Activated CD4-positive, alpha-beta T cell treated with anti-CD3 and anti-CD28 coated beads for 36 hours (primary cell): ENCODE measurements at regions of chr12 and their contacts with region 1.

Region 1: GRCh38 chr12:88153959-88154358 is 11.9 kb downstream of the TMTC3 start:
- DNase-seq: no peak
- ATAC-seq: no peak
- H3K4me3 Mint-ChIP-seq: no peak overlapping the region
- H3K27ac Mint-ChIP-seq: no peak overlapping the region
- H3K4me1 Mint-ChIP-seq: peaks cover 22% of the 10 kb centered on the region
- H3K27me3 Mint-ChIP-seq: no peaks in the 10 kb centered on the region

Region 2: GRCh38 chr12:88291498-88292131 is 137.7 kb after region 1 on chr12:
- CTCF ChIA-PET with region 1: no interaction called
- POLR2A ChIA-PET with region 1: no interaction called
- intact Hi-C with region 1: no loop called
- DNase-seq: no peak
- ATAC-seq: no peak
- H3K4me3 Mint-ChIP-seq: no peak overlapping the region
- H3K27ac Mint-ChIP-seq: no peak overlapping the region
- H3K4me1 Mint-ChIP-seq: peaks cover 7% of the 10 kb centered on the region
- H3K27me3 Mint-ChIP-seq: no peaks in the 10 kb centered on the region

Region 3: GRCh38 chr12:88393017-88393767 is 239.2 kb after region 1 on chr12:
- CTCF ChIA-PET with region 1: interaction called, 3 read pairs
- POLR2A ChIA-PET with region 1: no interaction called
- intact Hi-C with region 1: loop called (anchors 1 to 5 kb)
- DNase-seq: no peak
- ATAC-seq: peak; percentile 37
- H3K4me3 Mint-ChIP-seq: no peak overlapping the region
- H3K27ac Mint-ChIP-seq: no peak overlapping the region
- H3K4me1 Mint-ChIP-seq: peaks cover 11% of the 10 kb centered on the region
- H3K27me3 Mint-ChIP-seq: peaks cover 11% of the 10 kb centered on the region

Region 4: DNA sequence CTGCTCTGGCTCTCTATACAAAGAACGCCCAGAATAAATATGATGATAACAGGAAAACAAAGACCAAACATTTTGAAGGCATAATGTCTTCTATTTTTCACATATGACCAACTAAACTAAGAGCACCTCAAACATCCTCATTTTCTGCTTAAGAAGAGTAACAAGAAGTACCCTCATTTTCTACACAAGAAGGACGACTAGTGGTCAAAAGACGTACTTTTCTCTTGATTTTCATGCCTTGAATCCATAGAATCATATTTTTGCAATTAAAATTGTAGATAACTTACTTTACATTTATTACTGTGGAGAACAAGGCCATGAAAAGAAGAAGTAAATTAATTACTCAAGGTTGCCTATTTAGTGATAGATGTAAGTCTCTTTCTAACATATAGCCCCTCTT is 839.7 kb after region 1 on chr12:
- CTCF ChIA-PET with region 1: no interaction called
- POLR2A ChIA-PET with region 1: no interaction called
- intact Hi-C with region 1: loop called in 1 of 2 experiments (anchors 10 kb)
- DNase-seq: no peak
- ATAC-seq: no peak
- H3K4me3 Mint-ChIP-seq: no peak overlapping the region
- H3K27ac Mint-ChIP-seq: no peak overlapping the region
- H3K4me1 Mint-ChIP-seq: no peaks in the 10 kb centered on the region
- H3K27me3 Mint-ChIP-seq: peaks cover 15% of the 10 kb centered on the region